Heart right ventricle (tissue), 16 donors: ENCODE measurements at regions of chr11 and their contacts with region 1.

Region 1: GRCh38 chr11:59171508-59172322 is at the start of gene DTX4:
- DNase-seq: peak; percentile 91 to 93
- ATAC-seq: peak; percentile 93 to 99 (median 96)
- H3K4me3 ChIP-seq: peak within 1 kb of the TSS; percentile 45 to 74 (median 68)
- H3K27ac ChIP-seq: peak within 1 kb of the TSS in 7 of 10 donors; percentile 26 to 80 (median 56)
- H3K4me1 ChIP-seq: peaks cover 0 to 34% (median 17%) of the 10 kb centered on the region in 9 donors
- H3K27me3 ChIP-seq: peaks cover 0 to 16% (median 0%) of the 10 kb centered on the region in 7 donors
- CTCF ChIP-seq: peak; percentile 71 to 88 (median 78)
- total RNA-seq, gene DTX4: 0.98 to 4.1 (median 2.7) TPM

Region 2: GRCh38 chr11:59119826-59120225 is 51.9 kb before region 1 on chr11:
- intact Hi-C with region 1: no loop called
- DNase-seq: no peak
- ATAC-seq: no peak
- H3K4me3 ChIP-seq: no peak overlapping the region
- H3K27ac ChIP-seq: no peak overlapping the region
- H3K4me1 ChIP-seq: no peaks in the 10 kb centered on the region
- H3K27me3 ChIP-seq: no peaks in the 10 kb centered on the region
- CTCF ChIP-seq: no peak

Region 3: GRCh38 chr11:59207988-59208451 is 36.3 kb after region 1 on chr11:
- intact Hi-C with region 1: loop called (anchors 1 to 5 kb)
- DNase-seq: peak in 1 of 2 donors; percentile 37
- ATAC-seq: peak in 6 of 8 donors; percentile 32 to 58 (median 50)
- H3K4me3 ChIP-seq: peak overlapping the region in 5 of 10 donors; percentile 22 to 58 (median 37)
- H3K27ac ChIP-seq: peak overlapping the region in 5 of 10 donors; percentile 16 to 69 (median 53)
- H3K4me1 ChIP-seq: peaks cover 0 to 32% (median 9%) of the 10 kb centered on the region in 9 donors
- H3K27me3 ChIP-seq: peaks cover 0 to 3% (median 0%) of the 10 kb centered on the region in 7 donors
- CTCF ChIP-seq: peak; percentile 53 to 83 (median 76)

Region 4: DNA sequence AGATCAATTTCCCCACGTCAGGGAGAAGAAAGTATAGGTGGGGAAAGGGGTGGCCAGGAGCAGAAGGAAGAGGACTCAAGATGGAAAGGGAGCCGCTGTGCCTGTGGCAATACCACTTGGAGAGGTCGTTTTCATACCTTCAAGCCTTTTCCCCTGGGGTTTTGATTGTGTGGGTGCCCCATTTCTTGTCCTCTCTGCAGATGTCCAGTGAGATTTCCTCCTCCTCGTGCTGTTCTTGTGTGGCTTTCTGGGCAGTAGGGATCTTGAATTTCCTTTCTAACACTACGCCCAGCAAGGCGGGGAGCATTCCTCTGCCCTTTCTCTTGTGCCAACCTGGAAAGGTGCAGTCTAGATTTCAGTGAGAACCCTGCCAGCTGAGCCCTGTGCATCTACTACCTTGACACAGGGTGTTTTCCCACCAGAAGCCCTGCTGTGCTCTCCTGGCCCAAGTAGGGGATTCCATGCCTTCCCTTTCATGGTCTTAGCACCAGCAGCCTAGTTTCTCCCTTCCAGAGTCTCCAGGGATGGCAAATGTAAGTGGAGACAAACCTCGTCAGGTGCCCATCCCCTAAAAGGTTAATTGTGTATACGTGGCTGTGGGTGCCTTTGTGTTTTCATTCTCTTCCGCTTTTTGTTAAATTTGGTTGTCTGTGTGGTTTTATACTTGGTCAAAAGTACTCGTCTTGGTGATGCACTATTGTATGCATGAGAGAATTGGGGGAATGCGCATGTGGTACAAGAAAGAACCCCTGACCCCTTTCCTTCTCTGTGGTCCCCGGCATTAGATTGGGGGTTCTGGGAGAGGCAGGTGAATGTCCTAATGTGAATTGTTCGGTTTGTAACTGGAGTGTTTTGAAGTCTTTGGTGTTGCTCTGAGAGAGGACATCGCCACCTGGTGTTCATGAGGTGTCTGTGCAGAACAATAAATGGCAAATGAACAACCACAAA is 112.4 kb after region 1 on chr11:
- intact Hi-C with region 1: loop called (anchors 1 to 10 kb)
- DNase-seq: peak in 1 of 2 donors; percentile 23
- ATAC-seq: peak in 7 of 8 donors; percentile 46 to 75 (median 69)
- H3K4me3 ChIP-seq: peak overlapping the region in 1 of 10 donors; percentile 17
- H3K27ac ChIP-seq: no peak overlapping the region
- H3K4me1 ChIP-seq: peaks cover 0 to 9% (median 0%) of the 10 kb centered on the region in 9 donors
- H3K27me3 ChIP-seq: peaks cover 0 to 12% (median 0%) of the 10 kb centered on the region in 7 donors
- CTCF ChIP-seq: peak; percentile 59 to 87 (median 83)

Region 5: DNA sequence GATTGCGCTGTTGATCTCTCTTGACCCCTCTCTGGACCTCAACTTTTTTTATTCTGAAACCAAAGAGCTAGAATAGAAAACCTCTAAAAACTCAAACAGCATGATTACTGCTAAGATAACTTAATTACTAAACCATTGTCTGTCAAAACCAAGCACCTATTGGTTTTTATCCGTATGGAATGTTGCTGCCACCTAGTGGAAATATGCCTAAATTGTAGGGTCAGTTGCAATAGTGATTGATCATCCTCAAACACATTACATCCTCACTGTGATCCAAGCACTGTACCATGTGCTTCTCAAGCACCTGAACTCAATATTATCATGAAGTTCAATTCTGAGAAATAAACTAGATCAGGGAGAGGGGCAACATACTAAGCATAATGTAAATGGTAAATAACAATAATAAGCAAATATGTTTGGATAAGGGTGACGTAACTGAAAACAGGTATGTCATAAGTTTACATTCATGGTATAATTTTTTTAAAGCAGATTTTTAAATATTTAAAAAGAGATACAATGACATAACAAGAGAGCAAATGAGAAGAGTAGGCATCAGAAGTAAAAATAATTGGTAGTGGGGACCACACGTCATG is 258.3 kb after region 1 on chr11:
- intact Hi-C with region 1: loop called in 7 of 10 experiments (anchors 2 to 10 kb)
- DNase-seq: peak in 1 of 2 donors; percentile 15
- ATAC-seq: no peak
- H3K4me3 ChIP-seq: no peak overlapping the region
- H3K27ac ChIP-seq: no peak overlapping the region
- H3K4me1 ChIP-seq: no peaks in the 10 kb centered on the region
- H3K27me3 ChIP-seq: peaks cover 0 to 6% (median 0%) of the 10 kb centered on the region in 7 donors
- CTCF ChIP-seq: peak; percentile 34 to 78 (median 63)